Activated naive CD4-positive, alpha-beta T cell treated with anti-CD3 and anti-CD28 coated beads, Interleukin-2, amount 10 ng/mL, durations not matched to agents 7 days and 5 days (primary cell): ENCODE measurements at regions of chr9 and their contacts with region 1.

Region 1: DNA sequence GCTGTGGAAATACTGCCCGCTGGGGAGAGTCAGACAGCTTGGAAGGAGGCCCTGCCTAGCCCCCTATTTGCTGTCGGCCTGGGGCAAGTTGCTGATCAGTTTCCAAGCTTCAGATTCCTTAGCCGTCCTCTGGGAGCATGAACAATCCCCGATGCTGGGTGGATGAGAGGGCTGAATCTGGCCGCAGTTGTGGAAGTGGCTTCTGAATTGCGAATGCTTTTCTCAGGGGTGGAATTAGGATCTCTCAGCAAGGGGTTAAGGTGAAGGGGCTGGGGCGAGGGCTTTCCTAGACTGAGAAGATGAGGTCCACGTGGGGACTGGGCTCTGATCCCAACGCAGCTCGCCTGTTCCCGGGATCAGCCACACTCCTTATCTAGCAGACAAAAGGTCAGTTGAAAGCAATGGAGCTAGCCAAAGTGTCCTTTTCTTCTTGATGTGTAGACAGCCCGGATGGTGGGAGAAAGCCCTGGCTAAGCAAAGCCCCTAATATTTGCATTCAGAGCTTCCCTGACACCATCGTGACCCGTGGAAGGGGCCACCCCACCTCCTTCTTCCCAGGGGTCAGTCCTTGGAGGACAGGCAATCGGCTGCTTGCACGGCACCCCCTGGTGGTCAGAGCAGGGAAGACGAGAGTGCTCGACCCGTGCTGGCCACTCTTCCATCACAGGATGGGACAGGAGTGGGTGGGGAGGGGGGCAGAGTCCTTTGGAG is 54.9 kb downstream of the COL15A1 start:
- DNase-seq: peak; percentile 72
- H3K4me3 Mint-ChIP-seq: no peak overlapping the region
- H3K27ac Mint-ChIP-seq: no peak overlapping the region
- H3K4me1 Mint-ChIP-seq: peaks cover 31% of the 10 kb centered on the region
- H3K27me3 Mint-ChIP-seq: peaks cover 50% of the 10 kb centered on the region

Region 2: GRCh38 chr9:98807070-98807810 is 191.4 kb before region 1 on chr9 and contains the start of gene GALNT12:
- CTCF ChIA-PET with region 1: interaction called, 28 read pairs
- DNase-seq: peak; percentile 70
- H3K4me3 Mint-ChIP-seq: peak within 1 kb of the TSS; percentile 84
- H3K27ac Mint-ChIP-seq: peak within 1 kb of the TSS; percentile 67
- H3K4me1 Mint-ChIP-seq: peaks cover 24% of the 10 kb centered on the region
- H3K27me3 Mint-ChIP-seq: peaks cover 47% of the 10 kb centered on the region

Region 3: DNA sequence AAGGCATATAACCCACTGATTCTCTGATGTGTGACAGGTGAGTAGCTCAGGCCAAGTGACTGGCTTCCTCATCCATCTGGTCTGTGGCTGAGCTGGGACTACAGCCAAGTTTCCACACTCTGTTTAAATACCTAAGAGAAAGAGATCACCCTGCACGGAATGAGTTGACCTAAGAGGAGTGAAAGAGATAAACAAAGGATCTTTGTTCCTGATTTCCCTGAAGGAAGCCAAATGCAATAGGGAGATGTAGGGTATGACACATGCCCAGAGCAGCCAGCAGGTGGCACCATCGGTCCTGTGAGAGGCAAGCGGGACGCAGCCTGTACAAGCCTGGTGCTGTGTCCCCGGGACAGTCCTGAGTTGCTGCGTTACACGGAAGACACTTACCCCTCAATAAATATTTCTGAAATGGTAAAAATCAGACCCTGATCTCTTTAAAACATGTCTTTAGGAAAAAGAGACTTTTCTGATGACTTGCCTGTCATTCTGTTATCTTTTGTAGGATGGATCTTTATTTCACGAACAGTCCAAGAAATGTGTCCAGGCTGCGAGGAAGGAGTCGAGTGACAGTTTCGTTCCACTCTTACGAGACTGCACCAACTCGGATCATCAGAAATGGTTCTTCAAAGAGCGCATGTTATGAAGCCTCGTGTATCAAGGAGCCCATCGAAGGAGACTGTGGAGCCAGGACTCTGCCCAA is 150.0 kb before region 1 on chr9:
- CTCF ChIA-PET with region 1: interaction called, 96 read pairs
- DNase-seq: peak; percentile 84
- H3K4me3 Mint-ChIP-seq: no peak overlapping the region
- H3K27ac Mint-ChIP-seq: no peak overlapping the region
- H3K4me1 Mint-ChIP-seq: peaks cover 11% of the 10 kb centered on the region
- H3K27me3 Mint-ChIP-seq: peaks cover 3% of the 10 kb centered on the region

Region 4: GRCh38 chr9:98974994-98975712 is 23.4 kb before region 1 on chr9:
- CTCF ChIA-PET with region 1: interaction called, 31 read pairs
- DNase-seq: peak; percentile 86
- H3K4me3 Mint-ChIP-seq: no peak overlapping the region
- H3K27ac Mint-ChIP-seq: no peak overlapping the region
- H3K4me1 Mint-ChIP-seq: peaks cover 13% of the 10 kb centered on the region
- H3K27me3 Mint-ChIP-seq: peaks cover 66% of the 10 kb centered on the region

Region 5: GRCh38 chr9:99012942-99013512 is 14.4 kb after region 1 on chr9:
- CTCF ChIA-PET with region 1: interaction called, 18 read pairs
- DNase-seq: no peak
- H3K4me3 Mint-ChIP-seq: no peak overlapping the region
- H3K27ac Mint-ChIP-seq: peak overlapping the region; percentile 92
- H3K4me1 Mint-ChIP-seq: peaks cover 23% of the 10 kb centered on the region
- H3K27me3 Mint-ChIP-seq: peaks cover 15% of the 10 kb centered on the region

Region 6: DNA sequence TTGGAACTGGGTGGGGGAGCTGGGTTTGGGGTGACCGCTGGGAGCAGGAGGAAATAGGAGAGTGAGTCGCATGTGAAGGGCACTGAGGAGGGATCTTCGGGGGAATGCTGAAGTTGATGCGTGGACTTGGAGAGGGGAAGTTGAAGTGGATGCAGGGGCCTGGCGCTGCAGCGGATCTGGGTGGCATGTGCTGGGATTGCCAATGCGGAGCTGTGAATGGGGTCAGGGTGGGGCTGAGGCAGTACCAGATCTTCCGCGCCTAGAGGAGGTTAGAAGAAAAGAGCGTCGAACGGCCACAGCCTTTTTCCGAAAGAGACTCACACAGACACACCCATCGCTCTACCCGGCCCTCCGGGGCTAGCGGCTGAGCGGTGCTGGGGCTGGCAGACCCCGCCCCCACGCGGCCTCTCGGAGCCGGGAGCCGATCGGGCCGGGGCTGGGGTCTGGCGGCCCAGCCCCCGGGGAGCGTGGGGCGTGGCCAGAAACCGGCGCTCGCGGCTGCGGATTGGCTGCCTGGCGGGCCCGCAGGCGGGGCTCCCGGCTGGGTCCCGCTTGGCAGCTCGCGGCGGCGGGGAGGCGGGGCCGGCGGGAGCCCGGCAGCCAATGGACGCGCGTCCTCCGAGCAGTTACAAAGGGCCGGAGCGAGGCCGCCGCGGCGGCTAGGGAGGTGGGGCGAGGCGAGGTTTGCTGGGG is 106.0 kb after region 1 on chr9 and contains the start of gene TGFBR1:
- CTCF ChIA-PET with region 1: interaction called, 15 read pairs
- DNase-seq: peak; percentile 95
- H3K4me3 Mint-ChIP-seq: peak within 1 kb of the TSS; percentile 74
- H3K27ac Mint-ChIP-seq: peak within 1 kb of the TSS; percentile 90
- H3K4me1 Mint-ChIP-seq: peaks cover 68% of the 10 kb centered on the region
- H3K27me3 Mint-ChIP-seq: no peaks in the 10 kb centered on the region